PC-3 (cell line): ENCODE measurements at regions of chr21 and their contacts with region 1.

Region 1: DNA sequence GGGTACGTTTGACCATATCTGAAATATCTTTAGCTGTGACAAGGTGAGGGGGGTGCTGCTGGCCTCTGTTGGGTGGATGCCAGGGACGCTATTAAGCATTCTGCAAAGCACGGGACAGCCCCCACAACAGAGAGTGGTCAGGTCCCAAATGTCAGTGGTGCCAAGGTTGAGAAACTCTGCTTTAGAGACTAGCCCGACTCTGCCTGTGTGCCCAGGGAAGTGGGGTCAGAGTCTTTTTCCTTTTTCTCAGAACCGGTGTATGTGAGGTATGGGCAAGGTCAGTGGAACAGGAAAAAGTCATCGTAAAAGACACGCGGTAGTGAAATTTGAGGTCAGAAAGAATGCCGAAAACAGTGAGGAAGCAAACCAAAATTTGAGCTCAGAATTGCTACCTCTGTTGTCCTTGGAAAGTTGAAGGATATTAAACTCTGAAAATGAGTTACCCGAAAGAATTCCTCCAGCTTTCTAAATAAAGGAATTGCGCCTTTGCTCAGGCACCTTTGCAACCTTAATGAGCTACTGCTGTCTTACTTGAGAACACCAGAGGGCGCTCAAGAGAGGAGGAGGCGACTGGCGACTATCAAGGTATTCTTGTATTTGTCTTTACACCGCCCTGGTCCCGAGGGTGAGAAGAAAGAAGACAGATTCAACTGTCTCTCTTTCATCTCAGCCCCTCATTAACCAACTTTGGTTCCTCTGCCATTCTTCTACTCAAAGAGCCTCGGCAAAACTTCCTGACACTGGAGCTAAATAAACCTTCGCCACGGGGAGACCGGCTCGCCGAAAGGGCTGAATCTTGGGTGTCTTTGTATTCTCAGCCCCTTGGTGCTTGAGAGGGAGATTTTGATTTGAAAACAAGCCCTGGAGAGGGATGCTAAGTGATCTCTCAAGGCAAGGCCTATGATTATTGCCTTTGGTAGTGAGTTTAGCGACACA is 85.4 kb upstream of the OLIG2 start:
- DNase-seq: peak; percentile 69
- ATAC-seq: peak; percentile 80; the same call in 1 of the 2 replicates
- H3K4me3 ChIP-seq: no peak overlapping the region
- H3K27ac ChIP-seq: no peak overlapping the region
- H3K4me1 ChIP-seq: no peaks in the 10 kb centered on the region
- H3K27me3 ChIP-seq: peaks cover 68% of the 10 kb centered on the region
- CTCF ChIP-seq: peak; percentile 90

Region 2: DNA sequence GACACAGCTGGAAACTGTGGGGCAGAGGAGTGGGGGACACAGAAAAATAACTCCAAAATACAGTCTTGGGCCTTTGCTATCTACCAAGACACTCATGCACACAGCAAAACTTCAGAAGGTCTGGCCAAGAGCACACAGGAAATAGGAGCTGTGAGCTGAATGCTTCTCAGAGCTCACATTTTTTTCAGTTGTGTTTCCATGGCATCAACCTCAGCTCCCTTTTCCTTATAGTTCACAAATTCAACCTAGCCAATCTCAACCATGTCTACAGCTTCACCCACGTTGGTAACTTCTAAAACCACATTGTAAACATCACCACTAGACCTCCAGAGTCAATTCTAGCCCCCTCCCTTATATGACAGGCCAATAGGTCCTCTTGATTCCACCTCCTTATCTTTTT is 193.0 kb before region 1 on chr21:
- CTCF ChIA-PET with region 1: no interaction called
- POLR2A ChIA-PET with region 1: no interaction called
- intact Hi-C with region 1: no loop called
- DNase-seq: no peak
- ATAC-seq: no peak
- H3K4me3 ChIP-seq: no peak overlapping the region
- H3K27ac ChIP-seq: no peak overlapping the region
- H3K4me1 ChIP-seq: peaks cover 13% of the 10 kb centered on the region
- H3K27me3 ChIP-seq: no peaks in the 10 kb centered on the region
- CTCF ChIP-seq: no peak

Region 3: GRCh38 chr21:32900814-32901213 is 39.5 kb before region 1 on chr21:
- CTCF ChIA-PET with region 1: interaction called, 15 read pairs
- POLR2A ChIA-PET with region 1: no interaction called
- intact Hi-C with region 1: no loop called
- DNase-seq: no peak
- ATAC-seq: no peak
- H3K4me3 ChIP-seq: no peak overlapping the region
- H3K27ac ChIP-seq: no peak overlapping the region
- H3K4me1 ChIP-seq: no peaks in the 10 kb centered on the region
- H3K27me3 ChIP-seq: peaks cover 80% of the 10 kb centered on the region
- CTCF ChIP-seq: no peak

Region 4: DNA sequence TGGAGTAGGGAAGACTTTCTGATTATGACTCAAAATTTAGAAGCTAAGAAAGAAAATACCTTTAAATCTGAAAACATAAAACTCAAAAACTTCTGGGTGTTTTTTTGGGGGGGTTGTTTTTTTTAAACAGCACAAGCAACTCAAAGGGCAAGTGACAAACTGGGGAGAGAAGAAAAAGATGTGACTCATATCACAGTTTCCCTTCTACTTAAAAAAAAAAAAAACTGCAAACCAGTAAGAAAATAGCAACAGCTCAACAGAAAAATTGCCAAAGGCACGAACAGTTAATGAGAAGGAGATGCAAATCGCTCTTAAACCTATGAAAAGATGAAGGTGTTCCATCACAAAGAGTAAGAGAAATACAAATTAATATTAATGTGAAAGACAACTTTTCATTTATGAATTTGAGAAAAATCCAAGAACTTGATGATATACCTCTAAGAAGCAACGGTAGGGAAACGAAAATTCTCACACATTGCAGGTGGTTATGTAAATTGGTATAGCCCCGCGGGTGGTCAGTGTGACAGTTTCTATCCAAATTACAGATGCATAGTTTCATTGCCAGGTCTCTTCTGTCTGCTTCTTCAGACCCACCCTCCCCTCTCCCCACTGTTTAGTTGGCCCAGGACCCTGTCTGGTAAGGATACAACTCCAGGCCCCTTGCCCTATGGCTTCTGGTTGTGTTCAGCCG is 298.4 kb after region 1 on chr21:
- CTCF ChIA-PET with region 1: no interaction called
- POLR2A ChIA-PET with region 1: no interaction called
- intact Hi-C with region 1: no loop called
- DNase-seq: no peak
- ATAC-seq: no peak
- H3K4me3 ChIP-seq: no peak overlapping the region
- H3K27ac ChIP-seq: no peak overlapping the region
- H3K4me1 ChIP-seq: no peaks in the 10 kb centered on the region
- H3K27me3 ChIP-seq: no peaks in the 10 kb centered on the region
- CTCF ChIP-seq: no peak

Region 5: GRCh38 chr21:33451634-33452071 is 511.3 kb after region 1 on chr21:
- CTCF ChIA-PET with region 1: no interaction called
- POLR2A ChIA-PET with region 1: no interaction called
- intact Hi-C with region 1: loop called (anchors 5 kb)
- DNase-seq: peak; percentile 93
- ATAC-seq: peak; percentile 96
- H3K4me3 ChIP-seq: peak overlapping the region; percentile 10; the same call in 1 of the 2 replicates
- H3K27ac ChIP-seq: peak overlapping the region; percentile 79
- H3K4me1 ChIP-seq: peaks cover 26% of the 10 kb centered on the region
- H3K27me3 ChIP-seq: no peaks in the 10 kb centered on the region
- CTCF ChIP-seq: no peak